Transverse colon (tissue), 4 donors: ENCODE measurements at regions of chrX and their contacts with region 1.

Region 1: GRCh38 chrX:47644557-47645091 is 5.7 kb downstream of the ELK1 start:
- DNase-seq: no peak
- H3K4me3 ChIP-seq: no peak overlapping the region
- H3K27ac ChIP-seq: no peak overlapping the region
- H3K4me1 ChIP-seq: peaks cover 0 to 12% (median 7%) of the 10 kb centered on the region in 4 donors
- H3K27me3 ChIP-seq: no peaks in the 10 kb centered on the region
- CTCF ChIP-seq: peak in 4 of 5 experiments; percentile 14 to 30 (median 24)
- EP300 ChIP-seq: no peak
- POLR2A ChIP-seq: no peak

Region 2: DNA sequence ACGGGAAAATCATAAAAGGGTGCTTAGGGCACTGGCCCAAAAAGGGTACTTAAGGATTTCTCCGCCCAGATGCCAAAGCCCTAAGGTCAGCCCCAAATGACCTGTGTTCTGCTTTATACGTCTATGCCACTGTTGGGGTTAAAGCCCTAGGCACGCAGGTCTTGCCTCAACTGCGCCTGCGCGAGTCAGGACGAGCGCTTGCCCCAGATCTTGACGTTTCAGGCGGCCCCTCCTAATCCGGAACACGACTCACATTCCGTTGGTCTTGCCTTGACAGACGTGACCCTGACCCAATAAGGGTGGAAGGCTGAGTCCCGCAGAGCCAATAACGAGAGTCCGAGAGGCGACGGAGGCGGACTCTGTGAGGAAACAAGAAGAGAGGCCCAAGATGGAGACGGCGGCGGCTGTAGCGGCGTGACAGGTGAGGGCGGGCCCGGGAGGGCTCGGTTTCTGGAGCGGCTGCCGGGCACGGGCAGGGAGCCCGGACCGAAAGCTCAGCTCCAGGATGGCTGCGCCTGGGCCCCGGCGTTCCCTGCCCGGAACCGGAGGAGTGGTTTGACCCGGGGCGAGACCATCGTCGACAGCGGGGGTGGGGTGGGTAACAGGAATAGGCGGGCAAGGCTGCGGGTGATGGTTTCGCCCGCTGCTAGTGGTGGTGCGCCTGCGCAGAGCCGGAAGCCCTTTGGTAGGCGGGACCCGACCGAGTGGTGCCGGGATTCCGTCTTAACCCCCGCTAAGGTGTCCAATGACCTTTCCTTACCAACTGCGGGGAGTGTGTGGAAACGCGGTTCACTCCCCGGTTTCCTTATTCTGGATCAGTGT is 83.6 kb before region 1 on chrX and contains the start of gene ARAF:
- in situ Hi-C with region 1: loop called in 1 of 4 experiments (anchors 10 kb)
- intact Hi-C with region 1: no loop called
- DNase-seq: peak; percentile 96
- H3K4me3 ChIP-seq: peak within 1 kb of the TSS; percentile 52 to 78 (median 66)
- H3K27ac ChIP-seq: peak within 1 kb of the TSS; percentile 91 to 95 (median 95)
- H3K4me1 ChIP-seq: peaks cover 0 to 33% (median 6%) of the 10 kb centered on the region in 4 donors
- H3K27me3 ChIP-seq: no peaks in the 10 kb centered on the region
- CTCF ChIP-seq: no peak
- EP300 ChIP-seq: no peak
- POLR2A ChIP-seq: peak; percentile 58
- total RNA-seq, gene ARAF: 58.4 to 247 (median 88.3) TPM